ENCODE measurements at regions of chr3 and their contacts with region 1.

Region 1: DNA sequence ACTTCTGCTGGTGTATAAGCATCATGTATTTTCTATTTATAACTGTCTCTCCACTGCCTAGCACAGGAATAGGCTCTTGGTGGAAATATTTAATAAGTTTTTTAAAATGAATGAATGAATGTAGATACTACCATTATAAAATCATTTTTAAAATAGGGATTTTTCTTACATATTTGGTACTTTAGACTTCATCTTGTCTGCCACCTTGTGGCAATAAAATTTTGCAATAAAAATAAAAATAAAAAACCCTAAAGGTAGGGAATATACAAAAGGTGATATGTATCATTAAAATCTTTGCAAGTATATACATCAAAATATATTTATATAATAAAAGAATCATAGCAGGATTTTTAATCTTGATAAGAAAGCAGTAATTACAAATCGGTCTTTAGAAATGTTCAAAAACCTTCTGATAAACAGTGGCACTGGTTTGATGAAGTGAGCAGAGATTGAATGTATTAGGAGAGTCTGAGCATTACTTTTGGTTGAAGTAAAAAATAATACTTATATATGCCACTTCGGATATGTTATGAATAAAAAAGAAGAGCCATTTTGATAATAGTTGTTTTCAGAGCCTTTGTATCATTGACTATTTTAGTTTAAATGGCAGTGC is 95.2 kb downstream of the SPATA16 start:
- DNase-seq: no peak
- ATAC-seq: no peak
- H3K4me3 ChIP-seq: no peak overlapping the region
- H3K27ac ChIP-seq: no peak overlapping the region
- H3K4me1 ChIP-seq: no peaks in the 10 kb centered on the region
- H3K27me3 ChIP-seq: no peaks in the 10 kb centered on the region; the same call in 1 of the 2 replicates
- CTCF ChIP-seq: peak; percentile 9; the same call in 1 of the 2 replicates

Region 2: GRCh38 chr3:172982736-172983364 is 63.0 kb before region 1 on chr3:
- CTCF ChIA-PET with region 1: no interaction called
- POLR2A ChIA-PET with region 1: no interaction called
- in situ Hi-C with region 1: no loop called
- intact Hi-C with region 1: loop called (anchors 5 kb)
- DNase-seq: no peak
- ATAC-seq: no peak
- H3K4me3 ChIP-seq: no peak overlapping the region
- H3K27ac ChIP-seq: no peak overlapping the region
- H3K4me1 ChIP-seq: no peaks in the 10 kb centered on the region
- H3K27me3 ChIP-seq: 0 out of 2 replicates have a peak, but pooled peaks cover 2% of the 10 kb centered on the region
- CTCF ChIP-seq: peak; percentile 46

Measured in Panc1 (cell line).